ENCODE measurements at regions of chr3 and their contacts with region 1.

Region 1: GRCh38 chr3:99376926-99377325 is 261.5 kb upstream of the COL8A1 start:
- DNase-seq: no peak
- ATAC-seq: no peak
- H3K4me3 ChIP-seq: no peak overlapping the region
- H3K27ac ChIP-seq: no peak overlapping the region
- H3K4me1 ChIP-seq: no peaks in the 10 kb centered on the region
- H3K27me3 ChIP-seq: no peaks in the 10 kb centered on the region
- CTCF ChIP-seq: no peak

Region 2: DNA sequence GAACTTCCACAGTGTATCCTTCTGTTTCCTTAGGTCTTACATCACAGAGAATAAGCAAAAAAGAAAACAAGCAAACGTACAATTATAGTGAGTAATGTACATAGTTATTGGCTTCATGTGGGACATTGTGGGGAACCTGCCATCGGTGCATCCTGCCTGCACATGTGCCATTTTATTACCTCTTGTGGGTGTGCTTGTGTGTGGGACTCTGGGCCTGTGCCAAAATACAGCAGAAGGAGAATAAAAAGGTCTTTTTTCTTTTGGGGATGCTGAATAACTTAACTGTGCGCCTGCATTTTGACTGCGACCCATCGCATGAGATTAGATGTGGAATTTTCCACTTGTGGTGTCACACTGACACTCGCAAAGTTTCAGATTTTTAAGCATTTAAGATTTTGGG is 305.8 kb before region 1 on chr3:
- CTCF ChIA-PET with region 1: no interaction called
- POLR2A ChIA-PET with region 1: no interaction called
- in situ Hi-C with region 1: no loop called
- intact Hi-C with region 1: loop called (anchors 5 kb)
- DNase-seq: no peak
- ATAC-seq: no peak
- H3K4me3 ChIP-seq: no peak overlapping the region
- H3K27ac ChIP-seq: no peak overlapping the region
- H3K4me1 ChIP-seq: no peaks in the 10 kb centered on the region
- H3K27me3 ChIP-seq: no peaks in the 10 kb centered on the region
- CTCF ChIP-seq: no peak

Region 3: DNA sequence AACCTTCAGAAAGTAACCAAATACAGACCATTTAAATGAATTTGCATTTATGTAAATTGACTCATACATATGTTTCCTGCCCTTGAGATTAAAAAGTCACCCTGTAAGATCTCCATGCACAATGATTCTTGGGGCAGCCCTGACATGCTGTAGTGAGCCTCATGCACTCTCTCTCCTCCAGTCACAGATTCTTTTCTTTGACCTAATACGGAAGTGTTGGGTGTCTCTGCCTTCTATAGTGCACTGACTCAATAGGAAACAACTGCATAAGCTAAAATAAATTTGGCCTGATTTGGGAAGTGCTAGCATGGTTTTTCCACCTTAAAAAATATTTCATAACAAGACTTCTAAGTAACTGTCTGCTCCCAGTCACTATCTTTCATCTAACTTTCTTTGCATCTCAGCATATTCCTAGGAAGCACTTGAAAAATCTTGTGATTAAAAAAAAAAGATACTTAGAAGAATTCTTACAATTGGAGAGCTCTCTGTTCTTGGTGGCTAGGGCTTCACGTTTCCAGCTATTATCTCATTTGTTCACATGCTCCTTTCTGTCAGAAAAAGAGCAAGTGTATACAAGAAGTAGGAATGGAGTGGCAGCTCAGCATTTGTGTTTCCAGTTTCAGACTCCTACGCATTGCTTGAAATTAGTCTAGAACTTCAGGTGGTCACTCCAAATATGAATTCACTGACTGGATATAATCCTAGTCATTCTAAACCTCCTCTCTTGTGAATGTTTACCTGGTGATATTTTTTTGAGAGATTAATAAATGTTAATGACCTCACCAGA is 53.6 kb after region 1 on chr3:
- CTCF ChIA-PET with region 1: no interaction called
- POLR2A ChIA-PET with region 1: no interaction called
- in situ Hi-C with region 1: no loop called
- intact Hi-C with region 1: no loop called
- DNase-seq: no peak
- ATAC-seq: no peak
- H3K4me3 ChIP-seq: no peak overlapping the region
- H3K27ac ChIP-seq: no peak overlapping the region
- H3K4me1 ChIP-seq: no peaks in the 10 kb centered on the region
- H3K27me3 ChIP-seq: no peaks in the 10 kb centered on the region
- CTCF ChIP-seq: no peak

Measured in Panc1 (cell line).